Natural killer cell (primary cell): ENCODE measurements at regions of chr11 and their contacts with region 1.

Region 1: DNA sequence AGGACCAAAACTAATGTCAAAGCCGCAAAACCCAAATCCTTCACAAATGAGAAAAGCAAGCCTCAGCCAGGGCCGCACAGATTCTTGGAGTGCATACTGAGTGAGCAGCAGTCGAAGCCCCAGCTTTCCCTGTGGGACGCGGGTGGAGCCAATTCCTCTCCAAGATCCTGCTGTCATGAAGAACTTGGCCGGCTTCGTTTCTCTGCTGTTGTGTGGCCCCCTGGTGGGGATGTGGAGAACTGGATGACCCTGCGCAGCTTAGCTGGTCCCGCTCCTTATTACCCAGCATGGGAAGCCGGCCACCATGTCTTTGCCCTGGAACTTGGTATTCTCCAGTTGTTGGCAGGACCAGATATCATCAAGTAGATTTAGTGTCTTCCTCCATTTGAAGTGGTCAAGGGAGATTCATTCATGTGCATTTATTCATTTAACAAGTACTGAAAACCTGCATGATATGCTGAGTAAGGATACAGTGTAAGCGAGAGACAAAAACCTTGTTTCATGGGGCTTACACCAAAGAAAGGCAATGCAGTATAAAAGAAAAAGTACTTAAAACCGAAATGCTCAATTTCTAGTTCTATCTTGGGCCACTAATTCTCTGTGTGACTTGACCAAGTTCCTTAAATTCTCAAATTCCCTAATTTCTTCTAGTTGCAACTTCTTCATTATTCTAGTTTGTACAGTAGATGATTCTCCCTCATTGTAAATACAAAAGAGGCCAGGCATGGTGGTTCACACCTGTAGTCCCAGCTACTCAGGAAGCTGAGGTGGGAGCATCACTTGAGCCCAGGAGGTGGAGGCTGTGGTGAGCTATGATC is 56.7 kb upstream of the CRTAM start:
- DNase-seq: peak; percentile 66 to 86
- ATAC-seq: peak; percentile 82 to 94 (median 92)
- H3K4me3 ChIP-seq: no peak overlapping the region
- H3K4me3 Mint-ChIP-seq: no peak overlapping the region
- H3K27ac ChIP-seq: no peak overlapping the region
- H3K27ac Mint-ChIP-seq: no peak overlapping the region
- H3K4me1 ChIP-seq: peaks cover 4% of the 10 kb centered on the region
- H3K4me1 Mint-ChIP-seq: peaks cover 7 to 11% of the 10 kb centered on the region in 2 donors
- H3K27me3 ChIP-seq: no peaks in the 10 kb centered on the region
- H3K27me3 Mint-ChIP-seq: no peaks in the 10 kb centered on the region
- CTCF ChIP-seq: peak; percentile 87

Region 2: GRCh38 chr11:122578168-122578825 is 203.3 kb before region 1 on chr11:
- intact Hi-C with region 1: loop called (anchors 1 kb)
- DNase-seq: no peak
- ATAC-seq: no peak
- H3K4me3 ChIP-seq: no peak overlapping the region
- H3K4me3 Mint-ChIP-seq: no peak overlapping the region
- H3K27ac ChIP-seq: no peak overlapping the region
- H3K27ac Mint-ChIP-seq: no peak overlapping the region
- H3K4me1 ChIP-seq: peaks cover 8% of the 10 kb centered on the region
- H3K4me1 Mint-ChIP-seq: peaks cover 10 to 11% of the 10 kb centered on the region in 2 donors
- H3K27me3 ChIP-seq: no peaks in the 10 kb centered on the region
- H3K27me3 Mint-ChIP-seq: peaks cover 3 to 6% of the 10 kb centered on the region in 2 donors
- CTCF ChIP-seq: no peak

Region 3: DNA sequence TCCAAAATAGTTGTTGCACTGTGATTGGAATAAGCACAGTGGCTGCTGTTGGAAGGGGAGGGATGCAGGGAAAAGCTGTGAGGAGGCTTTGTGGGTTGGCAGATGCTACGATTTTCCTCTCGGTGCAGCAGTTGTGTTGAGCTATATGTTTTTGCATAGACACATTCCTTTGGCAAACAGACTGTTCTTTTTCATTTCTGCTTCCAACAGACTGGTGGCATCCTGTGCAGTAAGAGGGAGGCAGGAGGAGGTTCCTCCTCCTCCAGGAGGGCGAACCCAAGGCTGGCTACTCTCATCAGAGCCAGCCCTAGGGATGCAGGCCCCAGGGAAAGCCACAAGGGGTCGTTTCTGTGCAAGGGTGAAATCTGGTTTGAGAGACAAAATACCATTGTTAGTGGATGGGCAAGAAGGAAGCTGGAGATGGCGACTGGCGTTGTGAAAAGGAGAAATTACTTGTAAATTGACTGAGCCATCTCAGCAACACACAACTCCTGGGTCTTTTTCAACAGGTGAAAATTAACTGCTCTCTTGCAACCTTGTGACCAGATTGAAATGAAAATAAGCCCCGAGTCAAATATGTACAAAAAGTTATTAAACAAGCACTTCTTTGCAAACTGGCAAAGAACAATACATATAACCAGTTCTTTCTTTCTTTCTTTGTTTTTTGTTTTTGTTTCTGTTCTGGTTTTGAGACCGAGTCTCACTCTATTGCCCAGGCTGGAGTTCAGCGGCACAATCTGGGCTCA is 152.6 kb before region 1 on chr11:
- intact Hi-C with region 1: loop called (anchors 1 kb)
- DNase-seq: peak; percentile 46 to 82
- ATAC-seq: peak; percentile 79 to 94 (median 90)
- H3K4me3 ChIP-seq: no peak overlapping the region
- H3K4me3 Mint-ChIP-seq: no peak overlapping the region
- H3K27ac ChIP-seq: no peak overlapping the region
- H3K27ac Mint-ChIP-seq: no peak overlapping the region
- H3K4me1 ChIP-seq: peaks cover 3% of the 10 kb centered on the region
- H3K4me1 Mint-ChIP-seq: peaks cover 0 to 5% of the 10 kb centered on the region in 2 donors
- H3K27me3 ChIP-seq: no peaks in the 10 kb centered on the region
- H3K27me3 Mint-ChIP-seq: no peaks in the 10 kb centered on the region
- CTCF ChIP-seq: peak; percentile 81

Region 4: GRCh38 chr11:122882857-122883645 is 101.5 kb after region 1 on chr11:
- intact Hi-C with region 1: no loop called
- DNase-seq: peak; percentile 41 to 66
- ATAC-seq: peak; percentile 59 to 73 (median 72)
- H3K4me3 ChIP-seq: peak overlapping the region; percentile 77
- H3K4me3 Mint-ChIP-seq: peak overlapping the region; percentile 90
- H3K27ac ChIP-seq: peak overlapping the region; percentile 80
- H3K27ac Mint-ChIP-seq: peak overlapping the region; percentile 63 to 82
- H3K4me1 ChIP-seq: peaks cover 10% of the 10 kb centered on the region
- H3K4me1 Mint-ChIP-seq: peaks cover 15 to 17% of the 10 kb centered on the region in 2 donors
- H3K27me3 ChIP-seq: no peaks in the 10 kb centered on the region
- H3K27me3 Mint-ChIP-seq: peaks cover 17 to 21% of the 10 kb centered on the region in 2 donors
- CTCF ChIP-seq: no peak